CD14-positive monocyte (primary cell): ENCODE measurements at regions of chr7 and their contacts with region 1.

Region 1: GRCh38 chr7:73769992-73770859 is at the start of gene CLDN3:
- DNase-seq: no peak
- H3K4me3 ChIP-seq: no peak within 1 kb of the TSS
- H3K4me3 Mint-ChIP-seq: peak within 1 kb of the TSS in 1 of 2 donors; percentile 74
- H3K27ac ChIP-seq: no peak within 1 kb of the TSS
- H3K27ac Mint-ChIP-seq: no peak within 1 kb of the TSS
- H3K4me1 ChIP-seq: peaks cover 7 to 9% of the 10 kb centered on the region in 2 donors
- H3K4me1 Mint-ChIP-seq: peaks cover 10% of the 10 kb centered on the region
- H3K27me3 ChIP-seq: peaks cover 9 to 49% of the 10 kb centered on the region in 2 donors
- H3K27me3 Mint-ChIP-seq: peaks cover 58 to 72% (median 62%) of the 10 kb centered on the region in 3 donors
- CTCF ChIP-seq: no peak
- polyA plus RNA-seq, gene CLDN3: not detected

Region 2: GRCh38 chr7:73606801-73607691 is 163.2 kb before region 1 on chr7:
- intact Hi-C with region 1: no loop called
- DNase-seq: peak; percentile 37 to 51 (median 50)
- H3K4me3 ChIP-seq: peak overlapping the region in 1 of 3 experiments; percentile 40
- H3K4me3 Mint-ChIP-seq: peak overlapping the region in 1 of 2 donors; percentile 81
- H3K27ac ChIP-seq: no peak overlapping the region
- H3K27ac Mint-ChIP-seq: peak overlapping the region in 3 of 7 donors; percentile 11 to 72 (median 48)
- H3K4me1 ChIP-seq: peaks cover 17 to 24% of the 10 kb centered on the region in 2 donors
- H3K4me1 Mint-ChIP-seq: peaks cover 21% of the 10 kb centered on the region
- H3K27me3 ChIP-seq: peaks cover 0 to 57% of the 10 kb centered on the region in 2 donors
- H3K27me3 Mint-ChIP-seq: peaks cover 60 to 85% (median 78%) of the 10 kb centered on the region in 3 donors
- CTCF ChIP-seq: peak; percentile 99

Region 3: GRCh38 chr7:73690646-73691045 is 79.6 kb before region 1 on chr7:
- intact Hi-C with region 1: no loop called
- DNase-seq: no peak
- H3K4me3 ChIP-seq: no peak overlapping the region
- H3K4me3 Mint-ChIP-seq: no peak overlapping the region
- H3K27ac ChIP-seq: no peak overlapping the region
- H3K27ac Mint-ChIP-seq: no peak overlapping the region
- H3K4me1 ChIP-seq: peaks cover 0 to 5% of the 10 kb centered on the region in 2 donors
- H3K4me1 Mint-ChIP-seq: peaks cover 9% of the 10 kb centered on the region
- H3K27me3 ChIP-seq: no peaks in the 10 kb centered on the region
- H3K27me3 Mint-ChIP-seq: peaks cover 0 to 3% (median 0%) of the 10 kb centered on the region in 3 donors
- CTCF ChIP-seq: no peak

Region 4: GRCh38 chr7:73718905-73719805 is 51.1 kb before region 1 on chr7 and contains the start of gene STX1A:
- intact Hi-C with region 1: no loop called
- DNase-seq: peak; percentile 30 to 64 (median 56)
- H3K4me3 ChIP-seq: peak within 1 kb of the TSS; percentile 23 to 78 (median 41)
- H3K4me3 Mint-ChIP-seq: peak within 1 kb of the TSS; percentile 82 to 92
- H3K27ac ChIP-seq: no peak within 1 kb of the TSS
- H3K27ac Mint-ChIP-seq: peak within 1 kb of the TSS in 5 of 7 donors; percentile 30 to 91 (median 79)
- H3K4me1 ChIP-seq: peaks cover 35 to 47% of the 10 kb centered on the region in 2 donors
- H3K4me1 Mint-ChIP-seq: peaks cover 39% of the 10 kb centered on the region
- H3K27me3 ChIP-seq: peaks cover 31 to 86% of the 10 kb centered on the region in 2 donors
- H3K27me3 Mint-ChIP-seq: peaks cover 79 to 91% (median 82%) of the 10 kb centered on the region in 3 donors
- CTCF ChIP-seq: no peak
- polyA plus RNA-seq, gene STX1A: 0.27 to 2.7 (median 0.37) TPM

Region 5: GRCh38 chr7:73828107-73828803 is 58.0 kb after region 1 on chr7:
- intact Hi-C with region 1: loop called in 1 of 2 experiments (anchors 10 kb)
- DNase-seq: peak in 1 of 3 donors; percentile 58
- H3K4me3 ChIP-seq: no peak overlapping the region
- H3K4me3 Mint-ChIP-seq: peak overlapping the region in 1 of 2 donors; percentile 72
- H3K27ac ChIP-seq: no peak overlapping the region
- H3K27ac Mint-ChIP-seq: peak overlapping the region in 1 of 7 donors; percentile 60
- H3K4me1 ChIP-seq: peaks cover 38 to 49% of the 10 kb centered on the region in 2 donors
- H3K4me1 Mint-ChIP-seq: peaks cover 42% of the 10 kb centered on the region
- H3K27me3 ChIP-seq: peaks cover 0 to 17% of the 10 kb centered on the region in 2 donors
- H3K27me3 Mint-ChIP-seq: peaks cover 29 to 52% (median 32%) of the 10 kb centered on the region in 3 donors
- CTCF ChIP-seq: no peak

Region 6: GRCh38 chr7:73858807-73859206 is 88.6 kb after region 1 on chr7:
- intact Hi-C with region 1: no loop called
- DNase-seq: no peak
- H3K4me3 ChIP-seq: no peak overlapping the region
- H3K4me3 Mint-ChIP-seq: peak overlapping the region in 1 of 2 donors; percentile 5
- H3K27ac ChIP-seq: no peak overlapping the region
- H3K27ac Mint-ChIP-seq: no peak overlapping the region
- H3K4me1 ChIP-seq: peaks cover 7 to 8% of the 10 kb centered on the region in 2 donors
- H3K4me1 Mint-ChIP-seq: peaks cover 8% of the 10 kb centered on the region
- H3K27me3 ChIP-seq: peaks cover 3 to 21% of the 10 kb centered on the region in 2 donors
- H3K27me3 Mint-ChIP-seq: peaks cover 29 to 47% (median 39%) of the 10 kb centered on the region in 3 donors
- CTCF ChIP-seq: no peak

Region 7: GRCh38 chr7:74043523-74043951 is 273.3 kb after region 1 on chr7:
- intact Hi-C with region 1: loop called in 1 of 2 experiments (anchors 10 kb)
- DNase-seq: no peak
- H3K4me3 ChIP-seq: no peak overlapping the region
- H3K4me3 Mint-ChIP-seq: no peak overlapping the region
- H3K27ac ChIP-seq: no peak overlapping the region
- H3K27ac Mint-ChIP-seq: no peak overlapping the region
- H3K4me1 ChIP-seq: no peaks in the 10 kb centered on the region
- H3K4me1 Mint-ChIP-seq: no peaks in the 10 kb centered on the region
- H3K27me3 ChIP-seq: no peaks in the 10 kb centered on the region
- H3K27me3 Mint-ChIP-seq: peaks cover 2 to 6% (median 2%) of the 10 kb centered on the region in 3 donors
- CTCF ChIP-seq: no peak